Right ventricle myocardium inferior (tissue), 1 donor: ENCODE measurements at regions of chr1 and their contacts with region 1.

Region 1: GRCh38 chr1:35030756-35031446 is 844 bp downstream of the ZMYM6 start:
- DNase-seq: no peak
- ATAC-seq: no peak

Region 2: DNA sequence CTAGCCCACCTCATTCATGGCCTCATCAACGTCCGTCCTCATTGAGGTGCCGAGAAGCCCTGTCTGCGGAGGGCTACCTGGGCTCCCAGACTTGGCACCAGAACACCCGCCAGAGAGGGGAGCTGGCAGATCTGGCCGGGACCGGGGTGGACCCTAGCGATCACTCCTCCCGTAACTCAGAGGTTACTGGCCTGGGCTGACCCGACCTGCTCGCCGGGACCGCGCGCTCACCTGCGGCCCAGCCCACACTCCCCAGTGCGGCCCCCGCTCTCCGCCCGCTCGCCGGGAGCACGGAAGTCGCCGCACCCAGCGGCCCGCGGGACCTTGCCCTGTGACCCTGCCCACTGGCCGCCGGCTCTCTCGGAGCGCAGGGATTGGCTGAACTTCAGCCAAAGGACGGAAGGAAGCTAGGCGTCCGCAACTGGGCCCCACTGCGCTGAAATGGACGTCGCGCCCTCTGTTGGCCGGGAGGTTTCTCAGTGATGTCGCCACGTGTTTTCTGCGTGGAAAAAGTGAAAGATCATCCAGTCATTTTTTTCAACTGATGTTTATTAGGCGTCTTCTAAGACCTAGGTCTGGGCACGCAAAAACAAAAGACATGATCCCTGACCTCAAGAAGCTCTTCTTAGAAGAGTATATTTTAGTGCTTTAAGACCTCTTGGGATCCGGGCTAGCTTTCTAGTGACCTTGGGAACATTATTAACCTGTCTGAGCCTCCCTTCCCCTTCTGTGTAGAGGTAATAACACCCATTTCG is 171.3 kb before region 1 on chr1 and contains the start of gene SMIM12:
- intact Hi-C with region 1: loop called (anchors 5 kb)
- DNase-seq: peak; percentile 97
- ATAC-seq: peak; percentile 99
- total RNA-seq, gene SMIM12: 40.6 TPM

Region 3: DNA sequence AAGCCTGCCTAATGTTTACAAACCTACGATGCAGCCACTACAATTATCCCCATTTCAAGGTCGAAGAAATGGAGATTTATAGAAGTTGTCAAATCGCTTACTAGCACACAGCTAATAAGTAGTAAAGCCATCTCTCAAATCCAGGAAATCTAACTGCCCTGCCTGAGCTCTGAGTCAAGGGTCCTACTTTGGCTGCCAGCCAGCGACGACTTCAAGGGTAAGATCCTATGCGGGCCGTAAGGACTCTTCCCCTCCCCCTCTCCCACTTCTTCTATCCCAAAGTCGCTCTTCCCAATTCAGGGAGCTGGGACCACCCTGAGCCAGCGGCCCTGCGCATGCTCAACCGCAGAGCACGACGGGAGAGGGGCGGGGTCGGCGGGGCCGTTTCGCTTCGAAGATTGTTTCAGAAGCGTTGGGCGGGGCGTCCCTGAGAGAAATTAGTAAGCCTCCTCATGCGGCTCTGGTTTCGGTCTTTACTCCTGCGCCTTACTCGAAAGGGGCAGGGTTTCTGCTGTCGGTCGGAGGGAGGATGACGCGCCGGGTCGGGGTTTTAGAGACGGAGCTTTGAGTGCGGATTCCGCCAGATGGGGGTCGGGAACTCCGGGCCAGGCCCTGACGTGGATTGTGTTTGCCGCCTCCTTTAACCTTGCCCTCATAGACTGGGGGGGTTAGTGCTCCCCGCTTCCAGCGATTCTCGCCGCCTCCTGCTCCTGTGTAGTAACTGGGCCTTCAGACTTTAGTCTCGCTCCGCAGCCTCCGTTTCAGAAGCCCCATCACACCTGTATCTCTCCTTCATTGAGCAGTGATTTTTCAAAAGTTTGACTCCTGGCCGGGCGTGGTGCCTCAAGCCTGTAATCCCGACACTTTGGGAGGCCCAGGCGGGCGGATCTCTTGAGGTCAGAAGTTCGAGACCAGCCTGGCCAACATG is 48.4 kb after region 1 on chr1 and contains the start of gene ZMYM1:
- intact Hi-C with region 1: loop called (anchors 5 kb)
- DNase-seq: peak; percentile 93
- ATAC-seq: peak; percentile 95
- total RNA-seq, gene ZMYM1: 4.5 TPM

Region 4: DNA sequence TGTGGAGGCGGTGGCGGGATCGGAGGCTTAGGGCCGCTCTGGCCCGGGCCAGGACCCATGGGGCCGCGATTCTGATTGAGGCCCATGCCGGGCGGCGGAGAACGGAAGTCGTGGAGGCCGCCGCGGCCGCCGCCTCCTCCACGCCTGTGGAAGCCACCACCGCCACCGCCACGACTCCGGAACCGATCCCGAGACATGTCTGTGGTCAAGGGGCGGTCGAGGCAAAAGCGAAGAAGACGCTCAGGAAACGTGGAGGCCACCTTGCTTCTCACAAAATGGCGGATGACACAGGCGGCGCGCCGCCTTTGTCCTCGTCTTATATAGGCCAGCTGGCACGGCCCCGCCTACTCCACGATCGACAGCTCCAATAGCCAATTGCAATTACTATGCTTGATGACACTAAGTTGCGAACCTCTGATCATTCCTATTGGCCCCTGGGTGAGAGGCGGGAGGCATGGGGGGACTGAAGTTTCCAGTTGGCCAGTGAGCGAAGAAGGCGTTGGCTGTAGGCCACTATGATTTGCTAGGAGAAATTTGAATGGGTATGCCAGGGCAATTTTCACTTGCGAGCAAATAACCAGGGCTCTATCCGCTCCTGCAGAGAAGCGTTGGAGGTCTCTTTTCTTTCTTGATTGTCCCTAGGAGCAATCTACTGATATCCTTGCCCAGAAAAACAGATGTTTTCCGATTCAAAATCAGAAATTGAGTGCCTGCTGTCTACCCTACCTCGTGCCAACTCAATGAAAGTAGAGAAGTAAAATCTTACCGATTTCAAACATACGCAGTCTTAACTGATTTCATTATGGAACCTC is 162.2 kb after region 1 on chr1 and contains the start of gene SFPQ:
- intact Hi-C with region 1: loop called (anchors 5 kb)
- DNase-seq: peak; percentile 96
- ATAC-seq: peak; percentile 97
- total RNA-seq, gene SFPQ: 79.2 TPM